ENCODE measurements at regions of chr12 and their contacts with region 1.

Region 1: GRCh38 chr12:96091833-96092232 is 56.4 kb upstream of the LTA4H start:
- DNase-seq: no peak
- ATAC-seq: no peak
- H3K4me3 ChIP-seq: no peak overlapping the region
- H3K4me3 Mint-ChIP-seq: no peak overlapping the region
- H3K27ac ChIP-seq: no peak overlapping the region
- H3K27ac Mint-ChIP-seq: no peak overlapping the region
- H3K4me1 ChIP-seq: peaks cover 7 to 13% of the 10 kb centered on the region in 2 experiments
- H3K4me1 Mint-ChIP-seq: peaks cover 17 to 22% (median 20%) of the 10 kb centered on the region in 3 donors
- H3K27me3 ChIP-seq: no peaks in the 10 kb centered on the region
- H3K27me3 Mint-ChIP-seq: no peaks in the 10 kb centered on the region

Region 2: GRCh38 chr12:96007729-96008128 is 84.1 kb before region 1 on chr12:
- CTCF ChIA-PET with region 1: no interaction called
- POLR2A ChIA-PET with region 1: no interaction called
- DNase-seq: no peak
- ATAC-seq: no peak
- H3K4me3 ChIP-seq: no peak overlapping the region
- H3K4me3 Mint-ChIP-seq: no peak overlapping the region
- H3K27ac ChIP-seq: no peak overlapping the region
- H3K27ac Mint-ChIP-seq: no peak overlapping the region
- H3K4me1 ChIP-seq: no peaks in the 10 kb centered on the region
- H3K4me1 Mint-ChIP-seq: no peaks in the 10 kb centered on the region
- H3K27me3 ChIP-seq: no peaks in the 10 kb centered on the region
- H3K27me3 Mint-ChIP-seq: no peaks in the 10 kb centered on the region

Region 3: GRCh38 chr12:96132819-96133218 is 41.0 kb after region 1 on chr12:
- CTCF ChIA-PET with region 1: no interaction called
- POLR2A ChIA-PET with region 1: interaction called in 1 of 2 experiments, 13 read pairs
- DNase-seq: peak in 9 of 35 experiments; percentile 3 to 39 (median 13)
- ATAC-seq: no peak
- H3K4me3 ChIP-seq: no peak overlapping the region
- H3K4me3 Mint-ChIP-seq: no peak overlapping the region
- H3K27ac ChIP-seq: no peak overlapping the region
- H3K27ac Mint-ChIP-seq: no peak overlapping the region
- H3K4me1 ChIP-seq: peaks cover 3 to 12% of the 10 kb centered on the region in 2 experiments
- H3K4me1 Mint-ChIP-seq: peaks cover 7 to 15% (median 14%) of the 10 kb centered on the region in 3 donors
- H3K27me3 ChIP-seq: peaks cover 0 to 14% of the 10 kb centered on the region in 2 experiments
- H3K27me3 Mint-ChIP-seq: peaks cover 7% of the 10 kb centered on the region in 2 donors

Measured in T-cell (primary cell).